ENCODE measurements at regions of chr14 and their contacts with region 1.

Region 1: DNA sequence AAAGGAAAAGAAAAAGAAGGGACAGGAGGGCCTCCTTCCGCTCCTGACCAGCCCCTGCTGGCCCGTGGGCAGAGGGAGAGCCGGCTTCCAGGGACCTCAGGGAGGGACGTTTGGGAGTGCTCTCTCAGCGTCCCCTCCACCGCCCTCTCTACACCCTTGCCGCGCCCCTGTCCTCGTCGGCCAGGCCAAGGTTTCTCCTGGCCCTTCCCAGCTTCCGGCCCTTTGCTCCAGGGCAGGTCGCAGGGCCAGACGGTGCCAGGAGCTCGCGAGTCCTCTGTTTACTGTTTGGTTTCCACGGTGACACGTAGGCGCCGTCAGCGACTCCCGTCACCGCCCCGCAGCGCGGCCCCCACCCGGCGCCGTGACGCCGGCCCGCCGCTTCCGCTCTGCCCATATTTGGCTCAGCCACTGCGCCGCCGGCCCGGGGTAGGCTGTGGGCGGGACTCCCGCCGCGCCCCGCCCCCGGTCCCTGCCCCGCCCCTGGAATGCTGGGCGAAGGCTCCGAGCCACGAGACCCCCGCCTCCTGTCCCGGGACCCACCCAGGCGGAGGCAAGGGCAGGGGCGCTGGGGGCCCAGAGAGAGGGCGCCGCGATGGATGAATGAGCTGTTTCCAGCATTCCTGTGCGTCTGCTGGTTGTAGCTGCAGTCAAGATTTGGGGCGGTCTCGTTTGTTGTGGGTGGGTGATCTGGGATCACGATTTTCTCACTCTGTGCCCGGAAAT is 15.5 kb downstream of the FOS start:
- DNase-seq: peak in 1 of 2 experiments; percentile 94
- H3K4me3 ChIP-seq: peak overlapping the region; percentile 61 to 87 (median 75)
- H3K27ac ChIP-seq: peak overlapping the region; percentile 98
- H3K4me1 ChIP-seq: peaks cover 3 to 12% (median 9%) of the 10 kb centered on the region in 4 experiments
- H3K27me3 ChIP-seq: no peaks in the 10 kb centered on the region
- CTCF ChIP-seq: 0 out of 4 replicates have a peak, but pooled peaks of 1 of the 3 experiments have one; percentile 0
- EP300 ChIP-seq: peak in 1 of 2 experiments; percentile 89; a peak in 1 of 3 replicates
- POLR2A ChIP-seq: peak; percentile 47 to 80
- RAD21 ChIP-seq: peak in 1 of 2 experiments; percentile 14; a peak in 1 of 4 replicates

Region 2: DNA sequence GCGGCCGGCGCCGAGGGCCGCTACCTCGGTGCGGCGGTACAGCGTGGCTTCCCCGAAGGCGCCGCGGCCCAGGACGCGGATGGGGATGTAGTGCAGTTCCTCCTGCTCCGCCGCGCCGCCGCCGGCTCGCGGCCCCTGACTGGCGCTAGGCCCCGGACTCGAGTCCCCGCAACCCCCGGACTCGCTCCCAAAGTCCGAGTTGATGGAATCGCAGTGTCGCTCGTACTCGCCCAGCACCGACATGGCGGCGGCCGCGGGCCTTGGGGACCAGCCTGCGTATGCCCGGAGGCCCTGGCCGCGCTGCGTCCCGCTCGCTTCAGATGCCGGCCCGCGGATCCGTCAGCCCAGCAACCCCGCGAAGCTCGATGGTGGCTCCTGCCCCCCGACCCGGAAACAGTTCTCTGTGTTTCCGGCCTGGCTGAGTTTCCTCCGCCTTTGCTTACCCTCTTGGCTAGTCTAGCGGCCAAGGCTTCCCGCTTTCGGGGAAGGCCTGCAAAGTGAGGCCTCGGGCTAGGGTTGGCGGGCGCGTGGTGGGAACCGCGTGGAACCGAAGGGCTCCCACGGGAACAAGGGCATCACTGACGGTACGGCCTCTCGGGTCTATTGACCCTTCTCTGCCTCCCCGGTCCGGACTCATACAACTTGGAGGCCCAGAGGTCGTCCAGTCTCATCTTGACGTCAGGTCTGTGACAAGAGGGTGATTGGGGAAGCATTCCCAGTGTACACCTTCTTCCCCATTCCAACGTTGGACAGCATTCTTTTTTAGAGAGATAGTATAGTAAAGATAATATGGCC is 167.2 kb before region 1 on chr14 and contains the start of gene NEK9:
- CTCF ChIA-PET with region 1: interaction called, 67 read pairs
- POLR2A ChIA-PET with region 1: interaction called, 14 read pairs
- DNase-seq: peak; percentile 56 to 88
- H3K4me3 ChIP-seq: peak within 1 kb of the TSS; percentile 75 to 89 (median 86)
- H3K27ac ChIP-seq: peak within 1 kb of the TSS; percentile 86
- H3K4me1 ChIP-seq: peaks cover 0 to 4% (median 1%) of the 10 kb centered on the region in 4 experiments; a peak in 5 of 7 replicates
- H3K27me3 ChIP-seq: no peaks in the 10 kb centered on the region
- CTCF ChIP-seq: 0 out of 4 replicates have a peak, but pooled peaks of 1 of the 3 experiments have one; percentile 3
- EP300 ChIP-seq: peak in 1 of 2 experiments; percentile 0; a peak in 1 of 3 replicates
- POLR2A ChIP-seq: peak; percentile 44 to 96
- RAD21 ChIP-seq: no peak
- total RNA-seq, gene NEK9: 39.5 and 43.6 TPM in 2 replicates

Region 3: DNA sequence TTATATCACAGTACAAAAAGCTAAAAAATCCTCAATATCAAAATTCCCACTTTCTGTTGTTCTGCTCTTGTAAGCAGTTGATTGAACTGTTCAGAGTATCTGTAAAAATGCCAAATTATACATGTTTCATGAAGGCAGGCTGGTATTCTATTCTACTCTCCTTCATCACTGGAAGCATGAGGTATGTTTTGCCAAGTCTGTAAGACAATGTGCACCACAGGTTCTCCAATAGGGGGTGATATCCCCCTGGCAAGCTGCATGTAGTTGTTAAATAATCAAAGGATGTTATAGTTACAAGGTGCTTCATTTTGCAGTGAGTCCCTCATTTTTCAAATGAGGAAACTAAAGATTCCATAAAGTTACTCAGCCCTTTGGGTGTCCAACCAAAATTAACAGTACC is 152.1 kb before region 1 on chr14:
- CTCF ChIA-PET with region 1: interaction called, 48 read pairs
- POLR2A ChIA-PET with region 1: interaction called, 5 read pairs
- DNase-seq: no peak
- H3K4me3 ChIP-seq: no peak overlapping the region
- H3K27ac ChIP-seq: no peak overlapping the region
- H3K4me1 ChIP-seq: no peaks in the 10 kb centered on the region
- H3K27me3 ChIP-seq: no peaks in the 10 kb centered on the region
- CTCF ChIP-seq: peak in 2 of 3 experiments; percentile 44 to 58; a peak in 2 of 4 replicates
- EP300 ChIP-seq: no peak
- POLR2A ChIP-seq: no peak
- RAD21 ChIP-seq: peak; percentile 70 to 72

Region 4: DNA sequence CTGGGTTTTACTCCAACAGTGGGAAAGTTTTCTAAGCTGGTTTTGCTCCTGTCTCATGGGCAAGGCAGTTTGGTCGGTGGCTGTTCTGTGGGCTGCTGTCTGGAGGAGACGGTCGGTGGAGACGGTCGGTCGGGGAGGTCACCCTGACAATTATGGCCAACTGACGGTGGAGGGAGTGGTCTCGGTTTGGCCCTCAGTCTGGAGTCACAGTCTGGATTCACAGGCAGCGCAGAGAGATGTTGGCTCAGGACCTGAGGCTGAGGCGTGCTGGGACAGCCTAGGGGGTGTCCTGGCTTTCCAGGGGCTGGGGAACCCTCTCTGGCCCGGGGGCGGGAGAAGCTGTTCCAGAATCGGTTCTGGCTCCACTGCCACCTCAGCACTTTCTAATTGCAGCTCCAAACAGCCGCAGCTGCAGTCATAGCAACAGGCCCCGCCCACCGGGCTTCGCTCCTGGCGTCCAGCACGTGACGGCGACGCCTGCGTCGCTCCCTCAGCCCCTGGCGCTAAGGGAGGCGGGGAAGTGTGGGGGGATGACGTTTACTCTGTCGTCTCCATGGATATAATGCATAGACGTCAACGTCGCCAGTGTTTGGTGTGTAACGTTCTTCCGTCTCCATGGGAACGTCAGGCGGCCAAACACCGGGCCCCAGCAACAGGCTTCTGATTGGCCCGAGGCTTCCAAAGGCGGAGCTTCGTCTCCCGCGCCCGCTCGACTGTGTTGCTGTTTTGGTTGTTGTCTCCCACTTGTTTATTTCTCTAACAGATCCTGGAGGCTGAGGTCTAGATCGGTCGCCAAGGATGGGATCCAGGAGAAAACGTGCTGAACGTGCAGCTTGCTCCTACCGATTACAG is 35.2 kb before region 1 on chr14:
- CTCF ChIA-PET with region 1: interaction called, 8 read pairs
- POLR2A ChIA-PET with region 1: interaction called, 41 read pairs
- DNase-seq: peak; percentile 98 to 99
- H3K4me3 ChIP-seq: peak overlapping the region; percentile 55 to 74 (median 66)
- H3K27ac ChIP-seq: peak overlapping the region; percentile 98
- H3K4me1 ChIP-seq: peaks cover 0 to 11% (median 4%) of the 10 kb centered on the region in 4 experiments; a peak in 5 of 7 replicates
- H3K27me3 ChIP-seq: no peaks in the 10 kb centered on the region
- CTCF ChIP-seq: no peak; a peak in 1 of 4 replicates
- EP300 ChIP-seq: peak; percentile 70 to 98; a peak in 2 of 3 replicates
- POLR2A ChIP-seq: peak; percentile 57 to 99
- RAD21 ChIP-seq: no peak

Region 5: DNA sequence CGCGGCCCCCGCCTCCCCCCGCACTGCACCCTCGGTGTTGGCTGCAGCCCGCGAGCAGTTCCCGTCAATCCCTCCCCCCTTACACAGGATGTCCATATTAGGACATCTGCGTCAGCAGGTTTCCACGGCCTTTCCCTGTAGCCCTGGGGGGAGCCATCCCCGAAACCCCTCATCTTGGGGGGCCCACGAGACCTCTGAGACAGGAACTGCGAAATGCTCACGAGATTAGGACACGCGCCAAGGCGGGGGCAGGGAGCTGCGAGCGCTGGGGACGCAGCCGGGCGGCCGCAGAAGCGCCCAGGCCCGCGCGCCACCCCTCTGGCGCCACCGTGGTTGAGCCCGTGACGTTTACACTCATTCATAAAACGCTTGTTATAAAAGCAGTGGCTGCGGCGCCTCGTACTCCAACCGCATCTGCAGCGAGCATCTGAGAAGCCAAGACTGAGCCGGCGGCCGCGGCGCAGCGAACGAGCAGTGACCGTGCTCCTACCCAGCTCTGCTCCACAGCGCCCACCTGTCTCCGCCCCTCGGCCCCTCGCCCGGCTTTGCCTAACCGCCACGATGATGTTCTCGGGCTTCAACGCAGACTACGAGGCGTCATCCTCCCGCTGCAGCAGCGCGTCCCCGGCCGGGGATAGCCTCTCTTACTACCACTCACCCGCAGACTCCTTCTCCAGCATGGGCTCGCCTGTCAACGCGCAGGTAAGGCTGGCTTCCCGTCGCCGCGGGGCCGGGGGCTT is 15.5 kb before region 1 on chr14 and contains the start of gene FOS:
- CTCF ChIA-PET with region 1: interaction called, 83 read pairs
- POLR2A ChIA-PET with region 1: interaction called, 351 read pairs
- DNase-seq: peak in 1 of 2 experiments; percentile 91
- H3K4me3 ChIP-seq: peak within 1 kb of the TSS; percentile 71 to 85 (median 76)
- H3K27ac ChIP-seq: peak within 1 kb of the TSS; percentile 100
- H3K4me1 ChIP-seq: peaks cover 4 to 11% (median 10%) of the 10 kb centered on the region in 4 experiments
- H3K27me3 ChIP-seq: peaks cover 0 to 26% (median 10%) of the 10 kb centered on the region in 4 experiments; a peak in 5 of 7 replicates
- CTCF ChIP-seq: no peak
- EP300 ChIP-seq: peak in 1 of 2 experiments; percentile 99; a peak in 2 of 3 replicates
- POLR2A ChIP-seq: peak; percentile 99
- RAD21 ChIP-seq: no peak
- total RNA-seq, gene FOS: 51.5 and 51.8 TPM in 2 replicates

Region 6: GRCh38 chr14:75389679-75390078 is 95.6 kb after region 1 on chr14:
- CTCF ChIA-PET with region 1: no interaction called
- POLR2A ChIA-PET with region 1: no interaction called
- DNase-seq: no peak
- H3K4me3 ChIP-seq: no peak overlapping the region
- H3K27ac ChIP-seq: no peak overlapping the region
- H3K4me1 ChIP-seq: peaks cover 0 to 8% (median 1%) of the 10 kb centered on the region in 4 experiments; a peak in 2 of 7 replicates
- H3K27me3 ChIP-seq: no peaks in the 10 kb centered on the region
- CTCF ChIP-seq: no peak
- EP300 ChIP-seq: no peak
- POLR2A ChIP-seq: no peak
- RAD21 ChIP-seq: no peak

Measured in H1 (cell line).